K562 (cell line): ENCODE measurements at regions of chr17 and their contacts with region 1.

Region 1: GRCh38 chr17:49880291-49881053 is 32.6 kb upstream of the TAC4 start:
- DNase-seq: peak; percentile 83 to 96 (median 94)
- ATAC-seq: peak; percentile 99
- H3K4me3 ChIP-seq: no peak overlapping the region
- H3K27ac ChIP-seq: no peak overlapping the region
- H3K4me1 ChIP-seq: peaks cover 13 to 20% of the 10 kb centered on the region in 2 experiments
- H3K27me3 ChIP-seq: peaks cover 8 to 50% of the 10 kb centered on the region in 2 experiments; a peak in 4 of 5 replicates
- CTCF ChIP-seq: peak; percentile 93 to 94 (median 94)
- EP300 ChIP-seq: no peak
- POLR2A ChIP-seq: no peak
- RAD21 ChIP-seq: peak; percentile 73 to 89

Region 2: DNA sequence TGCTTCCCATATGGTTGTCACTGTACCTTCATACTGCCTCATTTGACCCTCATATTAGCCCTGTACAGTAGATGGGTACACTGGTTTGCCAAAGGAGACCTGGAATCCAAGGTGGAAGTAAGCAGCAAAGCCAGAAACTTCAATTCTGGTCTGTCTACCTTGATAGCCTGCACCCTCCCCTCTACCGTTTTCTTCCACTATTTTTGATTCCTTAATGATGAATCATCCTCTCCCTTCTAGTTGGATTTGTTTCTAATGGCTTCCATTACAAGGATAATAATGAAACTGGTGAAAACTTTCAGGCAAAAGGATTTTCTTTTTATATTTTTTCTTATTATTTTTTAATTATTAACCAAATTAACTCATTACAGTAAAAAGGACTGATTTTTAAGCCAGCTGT is 49.9 kb before region 1 on chr17:
- CTCF ChIA-PET with region 1: no interaction called
- POLR2A ChIA-PET with region 1: no interaction called
- in situ Hi-C with region 1: no loop called
- intact Hi-C with region 1: no loop called
- DNase-seq: no peak
- ATAC-seq: no peak
- H3K4me3 ChIP-seq: no peak overlapping the region
- H3K27ac ChIP-seq: no peak overlapping the region
- H3K4me1 ChIP-seq: peaks cover 0 to 17% of the 10 kb centered on the region in 2 experiments; a peak in 3 of 5 replicates
- H3K27me3 ChIP-seq: no peaks in the 10 kb centered on the region
- CTCF ChIP-seq: no peak
- EP300 ChIP-seq: no peak
- POLR2A ChIP-seq: no peak
- RAD21 ChIP-seq: no peak

Region 3: GRCh38 chr17:49861150-49861892 is 19.2 kb before region 1 on chr17:
- CTCF ChIA-PET with region 1: interaction called, 4 read pairs
- POLR2A ChIA-PET with region 1: interaction called, 3 read pairs
- in situ Hi-C with region 1: no loop called
- intact Hi-C with region 1: loop called (anchors 1 kb)
- DNase-seq: peak; percentile 77 to 92 (median 89)
- ATAC-seq: peak; percentile 82
- H3K4me3 ChIP-seq: no peak overlapping the region
- H3K27ac ChIP-seq: no peak overlapping the region
- H3K4me1 ChIP-seq: peaks cover 0 to 13% of the 10 kb centered on the region in 2 experiments; a peak in 3 of 5 replicates
- H3K27me3 ChIP-seq: peaks cover 16 to 45% of the 10 kb centered on the region in 2 experiments
- CTCF ChIP-seq: peak; percentile 92 to 95 (median 95)
- EP300 ChIP-seq: no peak
- POLR2A ChIP-seq: no peak
- RAD21 ChIP-seq: peak; percentile 95 to 99

Region 4: DNA sequence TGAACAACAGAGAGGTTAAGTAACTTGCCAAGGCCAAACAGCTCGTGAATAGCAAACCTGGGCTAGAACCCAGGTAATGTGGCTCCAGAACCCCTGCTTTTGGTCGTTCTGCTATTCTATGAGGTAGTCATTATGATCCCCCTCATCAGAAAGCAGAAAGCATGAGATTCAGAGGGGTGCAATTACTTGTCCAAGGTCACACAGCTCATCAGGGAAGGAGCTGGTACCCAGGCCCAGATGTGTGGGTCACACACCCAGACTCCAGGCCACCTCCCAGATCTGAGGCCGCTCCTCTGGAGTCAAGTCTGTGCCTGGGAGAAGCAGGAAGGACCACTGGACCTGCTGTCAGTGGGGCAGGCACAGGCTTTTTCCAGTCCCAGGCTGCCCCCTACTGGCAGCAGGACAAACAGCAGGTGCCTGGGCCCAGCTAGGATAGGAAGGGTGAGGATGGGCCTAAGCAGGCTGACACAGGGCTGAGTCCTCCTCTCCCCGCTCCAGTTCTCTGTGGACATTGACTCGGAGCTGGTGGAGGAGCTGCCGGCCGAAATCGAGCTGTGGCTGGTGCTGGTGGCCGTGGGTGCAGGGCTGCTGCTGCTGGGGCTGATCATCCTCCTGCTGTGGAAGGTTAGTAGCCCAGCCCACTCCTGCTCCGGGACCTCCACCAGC is 206.9 kb after region 1 on chr17:
- CTCF ChIA-PET with region 1: no interaction called
- POLR2A ChIA-PET with region 1: no interaction called
- in situ Hi-C with region 1: no loop called
- intact Hi-C with region 1: loop called (anchors 10 kb)
- DNase-seq: peak; percentile 79 to 86 (median 82)
- ATAC-seq: peak; percentile 99
- H3K4me3 ChIP-seq: no peak overlapping the region
- H3K27ac ChIP-seq: no peak overlapping the region
- H3K4me1 ChIP-seq: peaks cover 0 to 3% of the 10 kb centered on the region in 2 experiments; a peak in 1 of 5 replicates
- H3K27me3 ChIP-seq: peaks cover 0 to 32% of the 10 kb centered on the region in 2 experiments; a peak in 3 of 5 replicates
- CTCF ChIP-seq: peak; percentile 91 to 97 (median 96)
- EP300 ChIP-seq: no peak
- POLR2A ChIP-seq: no peak
- RAD21 ChIP-seq: peak; percentile 84 to 92